Dorsolateral prefrontal cortex (tissue), 120 donors: ENCODE measurements at regions of chr2 and their contacts with region 1.

Region 1: DNA sequence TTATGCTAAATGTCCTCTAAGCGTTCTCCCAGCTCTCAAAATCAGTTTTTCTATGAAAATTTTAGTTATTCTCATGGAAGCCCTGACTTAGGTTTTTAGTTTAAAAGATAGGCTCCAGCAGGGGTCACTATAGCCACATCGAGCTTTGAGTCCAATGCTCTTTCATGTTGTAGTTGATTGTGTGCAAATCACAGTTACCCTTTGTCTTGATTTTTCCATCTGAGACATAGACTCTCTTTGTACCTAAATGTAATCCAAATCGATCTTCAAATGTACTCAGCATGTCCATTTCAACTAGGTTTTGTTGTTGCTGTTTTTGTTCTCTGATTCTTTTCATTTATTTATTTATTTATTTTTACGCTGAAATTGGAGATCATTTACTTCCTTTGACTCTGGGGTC is 26.4 kb upstream of the MSTN start:
- DNase-seq: peak in 4 of 10 donors; percentile 6 to 58 (median 37)
- H3K4me3 ChIP-seq: peak overlapping the region in 1 of 59 donors; percentile 27
- H3K27ac ChIP-seq: peak overlapping the region in 54 of 59 donors; percentile 7 to 87 (median 71)
- H3K27me3 ChIP-seq: no peaks in the 10 kb centered on the region
- CTCF ChIP-seq: peak; percentile 68 to 98 (median 85)

Region 2: GRCh38 chr2:190180313-190181122 is 91.6 kb after region 1 on chr2:
- intact Hi-C with region 1: loop called (anchors 2 kb)
- DNase-seq: peak; percentile 6 to 76 (median 57)
- H3K4me3 ChIP-seq: peak overlapping the region; percentile 52 to 92 (median 73)
- H3K27ac ChIP-seq: peak overlapping the region; percentile 70 to 99 (median 96)
- H3K27me3 ChIP-seq: no peaks in the 10 kb centered on the region
- CTCF ChIP-seq: peak in 50 of 56 donors; percentile 25 to 73 (median 56)

Region 3: DNA sequence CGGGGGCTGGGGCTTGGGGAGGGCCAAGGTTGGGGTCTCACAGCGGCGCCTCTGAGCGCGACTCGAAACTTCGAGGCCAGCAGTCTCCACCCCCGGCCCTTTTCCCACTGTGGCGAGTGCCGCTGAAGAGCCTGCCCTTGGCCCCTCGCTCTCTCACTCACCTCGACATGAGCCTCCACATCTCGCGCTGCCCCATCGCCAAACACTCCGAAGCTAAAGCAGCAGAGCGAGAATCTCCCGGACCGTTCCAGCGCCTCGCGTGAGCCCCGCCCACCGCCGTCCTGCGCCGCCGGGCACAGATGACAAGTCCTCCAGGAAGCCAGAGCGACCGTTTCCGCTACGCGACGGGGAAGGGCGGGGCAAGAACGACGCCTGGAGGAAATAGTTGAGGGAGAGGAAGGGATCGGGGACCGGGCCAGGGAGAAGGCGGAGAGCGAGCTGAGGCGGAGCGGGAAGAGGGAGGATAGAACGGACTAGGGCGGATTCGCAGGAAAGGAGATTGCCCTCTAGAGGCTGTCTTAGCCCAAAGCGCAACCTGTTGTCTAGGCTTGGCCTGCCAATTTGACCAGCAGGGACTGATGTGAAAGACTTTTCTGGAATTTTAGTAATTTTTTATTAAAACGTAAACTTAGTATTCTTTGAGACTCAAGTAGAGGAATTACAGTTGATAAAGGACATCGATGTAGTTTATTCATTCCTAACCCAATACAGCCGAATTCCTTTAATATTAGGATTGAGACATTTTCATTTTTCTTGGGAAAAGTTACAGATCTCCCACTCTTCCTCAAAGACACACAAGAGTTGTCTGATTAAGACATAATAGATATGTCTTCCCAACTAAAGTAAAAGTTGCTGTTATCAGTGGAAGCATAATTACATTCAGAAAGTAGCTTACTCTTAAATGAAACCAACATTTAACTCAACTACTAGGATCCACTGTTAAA is 230.9 kb after region 1 on chr2 and contains the start of gene HIBCH:
- intact Hi-C with region 1: loop called (anchors 2 to 10 kb)
- DNase-seq: peak; percentile 95 to 99 (median 98)
- H3K4me3 ChIP-seq: peak within 1 kb of the TSS; percentile 67 to 93 (median 81)
- H3K27ac ChIP-seq: peak within 1 kb of the TSS in 58 of 59 donors; percentile 82 to 99 (median 94)
- H3K27me3 ChIP-seq: no peaks in the 10 kb centered on the region
- CTCF ChIP-seq: peak; percentile 71 to 97 (median 90)
- total RNA-seq, gene HIBCH: 29.2 to 189 (median 49.2) TPM

Region 4: GRCh38 chr2:190511104-190511503 is 422.2 kb after region 1 on chr2:
- intact Hi-C with region 1: loop called in 1 of 2 experiments (anchors 2 kb)
- DNase-seq: no peak
- H3K4me3 ChIP-seq: no peak overlapping the region
- H3K27ac ChIP-seq: peak overlapping the region in 35 of 59 donors; percentile 2 to 81 (median 53)
- H3K27me3 ChIP-seq: no peaks in the 10 kb centered on the region
- CTCF ChIP-seq: peak; percentile 45 to 90 (median 70)